Endothelial cell of umbilical vein (primary cell): ENCODE measurements at regions of chr3 and their contacts with region 1.

Region 1: DNA sequence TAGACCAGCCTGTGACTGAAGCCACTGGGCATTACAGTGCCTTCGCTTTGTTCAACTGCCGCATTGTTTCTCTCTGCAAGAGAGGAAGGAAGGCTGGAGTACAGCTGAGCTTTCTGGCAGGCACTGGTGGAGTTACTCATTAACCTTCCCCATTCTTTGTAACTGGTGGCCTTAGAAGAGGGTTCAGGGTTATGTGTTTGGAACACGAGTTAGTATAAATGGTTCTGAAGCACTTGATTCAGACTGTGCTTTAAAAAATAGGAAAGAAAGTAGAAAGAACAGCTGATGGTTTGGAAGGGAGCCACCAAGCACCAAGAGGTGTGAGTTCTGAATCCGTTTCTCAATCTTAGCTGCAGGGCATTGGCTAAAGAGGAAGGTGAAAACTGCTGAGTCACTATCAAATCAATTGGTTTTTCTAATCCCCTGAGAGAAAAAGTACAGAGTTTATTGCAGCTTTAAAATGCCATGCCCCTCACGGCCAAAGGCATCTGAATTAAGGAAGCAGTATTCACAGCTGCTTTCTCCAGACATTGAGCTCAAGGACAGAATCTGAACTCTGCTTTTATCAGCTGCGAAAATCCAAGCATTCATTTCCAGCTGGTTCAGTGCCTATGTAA is 3.6 kb downstream of the HGD start:
- DNase-seq: peak; percentile 95
- H3K4me3 ChIP-seq: peak overlapping the region in 1 of 3 experiments; percentile 36
- H3K27ac ChIP-seq: peak overlapping the region; percentile 63
- H3K4me1 ChIP-seq: peaks cover 21% of the 10 kb centered on the region
- H3K27me3 ChIP-seq: no peaks in the 10 kb centered on the region
- CTCF ChIP-seq: no peak
- POLR2A ChIP-seq: peak; percentile 60

Region 2: GRCh38 chr3:120567370-120568201 is 110.9 kb before region 1 on chr3:
- CTCF ChIA-PET with region 1: interaction called, 19 read pairs
- POLR2A ChIA-PET with region 1: interaction called, 3 read pairs
- dilution Hi-C with region 1: no loop called
- intact Hi-C with region 1: no loop called
- DNase-seq: peak; percentile 70
- H3K4me3 ChIP-seq: peak overlapping the region in 1 of 3 experiments; percentile 21
- H3K27ac ChIP-seq: no peak overlapping the region
- H3K4me1 ChIP-seq: no peaks in the 10 kb centered on the region
- H3K27me3 ChIP-seq: no peaks in the 10 kb centered on the region
- CTCF ChIP-seq: peak; percentile 14 to 23
- POLR2A ChIP-seq: no peak

Region 3: DNA sequence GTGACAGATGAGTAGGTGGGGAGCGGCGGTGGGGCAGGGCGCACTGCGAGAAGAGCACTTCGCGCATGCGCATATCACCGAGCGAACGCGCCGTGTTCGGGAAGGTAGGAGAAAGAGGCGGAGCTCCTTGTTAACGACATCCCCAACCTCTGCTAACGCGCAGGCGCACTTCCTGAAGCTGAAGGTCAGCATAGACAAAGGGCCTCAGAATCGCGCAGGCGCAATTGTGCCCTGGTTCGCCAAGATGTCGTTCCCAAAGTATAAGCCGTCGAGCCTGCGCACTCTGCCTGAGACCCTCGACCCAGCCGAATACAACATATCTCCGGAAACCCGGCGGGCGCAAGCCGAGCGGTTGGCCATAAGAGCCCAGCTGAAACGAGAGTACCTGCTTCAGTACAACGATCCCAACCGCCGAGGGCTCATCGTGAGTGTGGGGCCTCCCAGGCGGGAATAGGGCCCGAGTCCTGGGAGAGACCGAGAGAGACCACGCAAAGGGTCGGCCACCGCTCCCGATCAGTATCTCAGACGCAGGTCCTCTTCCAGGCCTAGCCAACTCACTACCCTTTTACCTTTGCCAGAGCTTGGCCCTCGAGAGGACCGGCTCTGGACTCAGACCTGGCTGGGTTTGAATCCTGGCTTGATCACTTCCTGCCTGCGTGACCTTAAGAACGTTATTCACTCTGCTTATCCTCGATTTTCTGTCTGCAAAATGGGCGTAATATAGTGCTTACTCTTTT is 82.2 kb before region 1 on chr3 and contains the start of gene NDUFB4:
- CTCF ChIA-PET with region 1: interaction called, 8 read pairs
- POLR2A ChIA-PET with region 1: interaction called, 6 read pairs
- dilution Hi-C with region 1: no loop called
- intact Hi-C with region 1: loop called (anchors 2 kb)
- DNase-seq: peak; percentile 99
- H3K4me3 ChIP-seq: peak within 1 kb of the TSS; percentile 50 to 88 (median 81)
- H3K27ac ChIP-seq: peak within 1 kb of the TSS; percentile 83
- H3K4me1 ChIP-seq: peaks cover 6% of the 10 kb centered on the region
- H3K27me3 ChIP-seq: no peaks in the 10 kb centered on the region
- CTCF ChIP-seq: no peak
- POLR2A ChIP-seq: peak; percentile 95
- total RNA-seq, gene NDUFB4: 140 TPM in 2 replicates

Region 4: DNA sequence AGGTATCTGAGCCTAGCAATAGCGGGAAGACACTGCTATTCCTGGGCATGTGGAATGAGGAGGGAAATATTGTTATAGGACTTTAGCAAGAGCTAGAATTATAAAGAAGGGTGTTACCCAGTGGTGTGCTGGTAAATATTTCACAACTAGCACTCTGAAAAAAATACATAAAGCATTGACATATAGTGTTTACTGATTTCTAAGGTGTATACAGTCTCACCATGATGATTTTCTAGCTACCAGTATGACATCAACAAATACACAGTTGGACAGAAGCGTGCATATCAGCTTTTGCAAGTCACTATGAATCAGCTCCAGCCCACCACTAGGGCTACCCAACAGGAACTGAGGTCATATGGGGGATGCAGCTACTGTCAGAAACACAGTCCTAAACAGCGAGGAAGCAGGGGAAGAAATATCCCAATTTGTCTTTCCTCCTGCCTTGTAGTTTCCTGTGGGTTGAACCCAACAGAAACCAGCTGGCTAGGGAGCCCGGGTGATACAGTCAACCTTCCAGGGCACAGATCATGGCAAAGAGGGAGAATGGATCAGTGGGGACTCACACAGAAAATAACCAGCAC is 36.0 kb before region 1 on chr3:
- CTCF ChIA-PET with region 1: interaction called, 5 read pairs
- POLR2A ChIA-PET with region 1: no interaction called
- dilution Hi-C with region 1: no loop called
- intact Hi-C with region 1: loop called (anchors 2 kb)
- DNase-seq: peak; percentile 40
- H3K4me3 ChIP-seq: no peak overlapping the region
- H3K27ac ChIP-seq: peak overlapping the region; percentile 54
- H3K4me1 ChIP-seq: peaks cover 9% of the 10 kb centered on the region
- H3K27me3 ChIP-seq: no peaks in the 10 kb centered on the region
- CTCF ChIP-seq: peak in 1 of 2 donors; percentile 3
- POLR2A ChIP-seq: no peak

Region 5: GRCh38 chr3:120693439-120694186 is 15.2 kb after region 1 on chr3:
- CTCF ChIA-PET with region 1: interaction called, 13 read pairs
- POLR2A ChIA-PET with region 1: interaction called, 7 read pairs
- dilution Hi-C with region 1: no loop called
- intact Hi-C with region 1: loop called (anchors 1 kb)
- DNase-seq: peak; percentile 79
- H3K4me3 ChIP-seq: no peak overlapping the region
- H3K27ac ChIP-seq: peak overlapping the region; percentile 68
- H3K4me1 ChIP-seq: peaks cover 12% of the 10 kb centered on the region
- H3K27me3 ChIP-seq: no peaks in the 10 kb centered on the region
- CTCF ChIP-seq: no peak
- POLR2A ChIP-seq: no peak

Region 6: GRCh38 chr3:121295966-121296365 is 617.5 kb after region 1 on chr3:
- CTCF ChIA-PET with region 1: no interaction called
- POLR2A ChIA-PET with region 1: no interaction called
- dilution Hi-C with region 1: no loop called
- intact Hi-C with region 1: loop called (anchors 10 kb)
- DNase-seq: peak; percentile 65
- H3K4me3 ChIP-seq: no peak overlapping the region
- H3K27ac ChIP-seq: peak overlapping the region; percentile 37
- H3K4me1 ChIP-seq: peaks cover 20% of the 10 kb centered on the region
- H3K27me3 ChIP-seq: no peaks in the 10 kb centered on the region
- CTCF ChIP-seq: no peak
- POLR2A ChIP-seq: no peak